Esophagus muscularis mucosa (tissue), 4 donors: ENCODE measurements at regions of chr5 and their contacts with region 1.

Region 1: GRCh38 chr5:64207978-64208377 is 42.3 kb downstream of the RNF180 start:
- DNase-seq: no peak
- H3K4me3 ChIP-seq: no peak overlapping the region
- H3K27ac ChIP-seq: no peak overlapping the region
- H3K4me1 ChIP-seq: peaks cover 0 to 7% (median 0%) of the 10 kb centered on the region in 4 donors
- H3K27me3 ChIP-seq: no peaks in the 10 kb centered on the region
- CTCF ChIP-seq: peak in 2 of 3 experiments; percentile 32 to 36
- EP300 ChIP-seq: no peak
- POLR2A ChIP-seq: no peak

Region 2: DNA sequence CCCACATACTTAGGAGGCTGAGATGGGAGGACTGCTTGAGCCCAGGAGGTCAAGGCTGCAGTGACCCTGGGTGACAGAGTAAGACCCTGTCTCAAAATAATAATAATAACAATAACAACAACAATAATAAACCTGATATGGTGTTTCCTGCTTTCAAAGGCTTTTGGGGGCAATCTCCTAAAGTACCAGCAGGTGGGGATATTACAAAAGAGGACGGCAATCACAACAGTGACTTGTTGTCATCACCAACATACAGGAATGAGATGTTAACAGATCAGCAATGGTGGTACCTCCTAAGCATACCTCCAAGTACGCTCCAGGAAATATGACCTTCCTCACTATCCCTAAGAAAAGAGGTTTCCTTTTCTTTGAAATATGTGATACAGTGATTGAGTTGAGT is 133.4 kb before region 1 on chr5:
- intact Hi-C with region 1: loop called (anchors 5 kb)
- DNase-seq: no peak
- H3K4me3 ChIP-seq: no peak overlapping the region
- H3K27ac ChIP-seq: no peak overlapping the region
- H3K4me1 ChIP-seq: no peaks in the 10 kb centered on the region
- H3K27me3 ChIP-seq: no peaks in the 10 kb centered on the region
- CTCF ChIP-seq: peak; percentile 21 to 60 (median 40)
- EP300 ChIP-seq: no peak
- POLR2A ChIP-seq: no peak

Region 3: GRCh38 chr5:64147849-64148441 is 60.0 kb before region 1 on chr5:
- intact Hi-C with region 1: loop called (anchors 5 kb)
- DNase-seq: peak; percentile 91
- H3K4me3 ChIP-seq: no peak overlapping the region
- H3K27ac ChIP-seq: no peak overlapping the region
- H3K4me1 ChIP-seq: peaks cover 12 to 28% (median 25%) of the 10 kb centered on the region in 4 donors
- H3K27me3 ChIP-seq: no peaks in the 10 kb centered on the region
- CTCF ChIP-seq: peak; percentile 66 to 79 (median 78)
- EP300 ChIP-seq: no peak
- POLR2A ChIP-seq: no peak

Region 4: GRCh38 chr5:64161420-64161819 is 46.6 kb before region 1 on chr5:
- intact Hi-C with region 1: no loop called
- DNase-seq: peak; percentile 29
- H3K4me3 ChIP-seq: no peak overlapping the region
- H3K27ac ChIP-seq: no peak overlapping the region
- H3K4me1 ChIP-seq: peaks cover 0 to 16% (median 5%) of the 10 kb centered on the region in 4 donors
- H3K27me3 ChIP-seq: no peaks in the 10 kb centered on the region
- CTCF ChIP-seq: no peak
- EP300 ChIP-seq: no peak
- POLR2A ChIP-seq: no peak

Region 5: GRCh38 chr5:64384761-64385160 is 176.8 kb after region 1 on chr5:
- intact Hi-C with region 1: no loop called
- DNase-seq: no peak
- H3K4me3 ChIP-seq: no peak overlapping the region
- H3K27ac ChIP-seq: no peak overlapping the region
- H3K4me1 ChIP-seq: no peaks in the 10 kb centered on the region
- H3K27me3 ChIP-seq: no peaks in the 10 kb centered on the region
- CTCF ChIP-seq: no peak
- EP300 ChIP-seq: no peak
- POLR2A ChIP-seq: no peak